Breast epithelium (tissue), 4 donors: ENCODE measurements at regions of chr13 and their contacts with region 1.

Region 1: GRCh38 chr13:38697628-38698333 is 10.9 kb downstream of the FREM2 start:
- DNase-seq: no peak
- H3K4me3 ChIP-seq: no peak overlapping the region
- H3K27ac ChIP-seq: no peak overlapping the region
- H3K4me1 ChIP-seq: no peaks in the 10 kb centered on the region
- H3K27me3 ChIP-seq: no peaks in the 10 kb centered on the region
- CTCF ChIP-seq: no peak
- POLR2A ChIP-seq: no peak

Region 2: DNA sequence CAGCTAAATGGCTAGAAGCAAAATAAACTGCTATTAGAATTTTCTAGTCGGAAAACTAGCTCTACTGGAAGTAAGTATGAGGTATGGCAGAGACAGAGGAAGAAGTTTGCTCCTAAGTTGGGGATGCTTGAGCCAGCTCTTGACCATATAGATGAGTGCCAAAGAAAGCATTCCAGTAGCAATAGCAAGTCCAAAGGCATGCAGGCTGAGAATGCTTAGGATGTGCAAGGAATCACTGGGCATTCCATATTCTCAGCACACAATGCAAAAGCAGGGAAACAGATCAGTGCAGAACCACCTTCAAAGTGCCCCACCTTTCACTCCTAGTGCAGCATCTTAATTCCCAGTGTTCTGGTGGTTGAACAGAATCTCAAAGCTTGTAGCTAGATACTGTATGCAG is 1991.0 kb before region 1 on chr13:
- intact Hi-C with region 1: loop called (anchors 10 kb)
- DNase-seq: no peak
- H3K4me3 ChIP-seq: no peak overlapping the region
- H3K27ac ChIP-seq: no peak overlapping the region
- H3K4me1 ChIP-seq: no peaks in the 10 kb centered on the region
- H3K27me3 ChIP-seq: no peaks in the 10 kb centered on the region
- CTCF ChIP-seq: no peak
- POLR2A ChIP-seq: no peak

Region 3: GRCh38 chr13:40031031-40031430 is 1333.2 kb after region 1 on chr13:
- intact Hi-C with region 1: no loop called
- DNase-seq: no peak
- H3K4me3 ChIP-seq: no peak overlapping the region
- H3K27ac ChIP-seq: no peak overlapping the region
- H3K4me1 ChIP-seq: no peaks in the 10 kb centered on the region
- H3K27me3 ChIP-seq: no peaks in the 10 kb centered on the region
- CTCF ChIP-seq: no peak
- POLR2A ChIP-seq: no peak